ENCODE measurements at regions of chr2 and their contacts with region 1.

Region 1: GRCh38 chr2:11129598-11130449 is 25.4 kb upstream of the SLC66A3 start:
- DNase-seq: peak; percentile 50 to 91
- ATAC-seq: peak; percentile 61 to 69 (median 68)
- H3K4me3 ChIP-seq: peak overlapping the region; percentile 29
- H3K4me3 Mint-ChIP-seq: peak overlapping the region; percentile 80
- H3K27ac ChIP-seq: peak overlapping the region; percentile 45
- H3K27ac Mint-ChIP-seq: peak overlapping the region in 1 of 2 donors; percentile 45
- H3K4me1 ChIP-seq: peaks cover 34% of the 10 kb centered on the region
- H3K4me1 Mint-ChIP-seq: peaks cover 13 to 19% of the 10 kb centered on the region in 2 donors
- H3K27me3 ChIP-seq: no peaks in the 10 kb centered on the region
- H3K27me3 Mint-ChIP-seq: peaks cover 0 to 5% of the 10 kb centered on the region in 2 donors
- CTCF ChIP-seq: no peak

Region 2: GRCh38 chr2:11097038-11097720 is 32.6 kb before region 1 on chr2:
- intact Hi-C with region 1: no loop called
- DNase-seq: no peak
- ATAC-seq: no peak
- H3K4me3 ChIP-seq: no peak overlapping the region
- H3K4me3 Mint-ChIP-seq: no peak overlapping the region
- H3K27ac ChIP-seq: no peak overlapping the region
- H3K27ac Mint-ChIP-seq: no peak overlapping the region
- H3K4me1 ChIP-seq: no peaks in the 10 kb centered on the region
- H3K4me1 Mint-ChIP-seq: no peaks in the 10 kb centered on the region
- H3K27me3 ChIP-seq: no peaks in the 10 kb centered on the region
- H3K27me3 Mint-ChIP-seq: peaks cover 7% of the 10 kb centered on the region in 2 donors
- CTCF ChIP-seq: no peak

Region 3: DNA sequence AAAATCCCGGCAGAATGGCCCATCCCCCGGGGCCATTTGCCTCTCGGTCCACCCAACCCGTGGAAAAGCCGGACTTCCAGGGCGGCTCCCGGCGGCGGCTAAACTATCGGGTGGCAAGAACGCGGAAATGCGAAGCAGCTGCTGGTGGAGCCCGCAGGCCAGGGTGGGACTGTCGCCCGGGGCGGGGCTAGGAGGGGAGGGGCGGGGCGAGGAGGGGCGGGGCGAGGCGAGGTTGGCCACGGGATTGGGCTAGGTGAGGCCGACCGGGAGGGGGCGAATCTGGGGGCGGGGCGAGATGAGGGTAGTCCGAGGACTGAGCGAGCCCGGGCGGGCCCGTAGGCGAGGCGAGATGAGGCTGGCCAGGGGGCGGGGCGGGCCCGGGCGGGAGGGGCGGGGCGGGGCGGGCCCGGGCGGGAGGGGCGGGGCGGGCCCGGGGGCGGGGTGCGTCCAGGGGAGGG is 25.1 kb after region 1 on chr2:
- intact Hi-C with region 1: loop called (anchors 2 kb)
- DNase-seq: peak; percentile 94 to 98
- ATAC-seq: peak; percentile 90 to 97 (median 91)
- H3K4me3 ChIP-seq: peak overlapping the region; percentile 70
- H3K4me3 Mint-ChIP-seq: peak overlapping the region; percentile 75
- H3K27ac ChIP-seq: peak overlapping the region; percentile 95
- H3K27ac Mint-ChIP-seq: peak overlapping the region; percentile 75 to 86
- H3K4me1 ChIP-seq: peaks cover 26% of the 10 kb centered on the region
- H3K4me1 Mint-ChIP-seq: peaks cover 12 to 24% of the 10 kb centered on the region in 2 donors
- H3K27me3 ChIP-seq: no peaks in the 10 kb centered on the region
- H3K27me3 Mint-ChIP-seq: no peaks in the 10 kb centered on the region
- CTCF ChIP-seq: no peak

Region 4: DNA sequence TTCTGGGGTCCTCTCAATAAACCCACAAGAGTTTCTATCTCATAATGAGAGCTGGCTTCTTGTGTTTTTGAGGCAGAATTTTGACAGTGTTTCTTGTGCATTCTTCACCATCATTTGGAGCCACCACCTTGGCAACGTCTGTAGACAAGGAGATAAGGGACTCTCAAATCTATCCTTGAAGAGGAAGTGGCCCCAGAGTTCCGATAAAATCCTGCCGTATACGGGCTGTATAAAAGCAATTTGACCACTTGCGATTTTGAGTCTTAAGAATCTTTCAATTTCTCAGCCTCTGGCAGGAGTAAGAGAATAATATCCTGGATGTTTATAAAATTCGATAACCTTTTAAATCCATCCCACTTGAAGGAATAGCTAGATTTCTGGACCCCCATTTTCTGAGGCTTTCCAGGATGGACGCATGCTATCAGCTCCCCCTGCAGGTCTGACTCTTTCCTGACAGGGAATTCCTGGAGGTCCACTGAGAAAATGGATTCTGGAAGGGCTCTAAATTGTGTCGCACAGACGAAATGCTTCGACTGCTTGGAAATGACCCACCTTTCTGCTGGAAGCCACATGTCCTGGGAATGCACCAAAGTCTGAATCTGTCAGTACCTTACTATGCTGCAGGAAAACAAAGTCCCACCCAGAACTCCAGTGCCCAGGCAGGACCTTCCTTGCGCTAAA is 282.1 kb after region 1 on chr2:
- intact Hi-C with region 1: loop called (anchors 10 kb)
- DNase-seq: peak in 1 of 2 donors; percentile 30
- ATAC-seq: no peak
- H3K4me3 ChIP-seq: no peak overlapping the region
- H3K4me3 Mint-ChIP-seq: no peak overlapping the region
- H3K27ac ChIP-seq: no peak overlapping the region
- H3K27ac Mint-ChIP-seq: no peak overlapping the region
- H3K4me1 ChIP-seq: no peaks in the 10 kb centered on the region
- H3K4me1 Mint-ChIP-seq: no peaks in the 10 kb centered on the region
- H3K27me3 ChIP-seq: no peaks in the 10 kb centered on the region
- H3K27me3 Mint-ChIP-seq: peaks cover 12 to 21% of the 10 kb centered on the region in 2 donors
- CTCF ChIP-seq: no peak

Region 5: DNA sequence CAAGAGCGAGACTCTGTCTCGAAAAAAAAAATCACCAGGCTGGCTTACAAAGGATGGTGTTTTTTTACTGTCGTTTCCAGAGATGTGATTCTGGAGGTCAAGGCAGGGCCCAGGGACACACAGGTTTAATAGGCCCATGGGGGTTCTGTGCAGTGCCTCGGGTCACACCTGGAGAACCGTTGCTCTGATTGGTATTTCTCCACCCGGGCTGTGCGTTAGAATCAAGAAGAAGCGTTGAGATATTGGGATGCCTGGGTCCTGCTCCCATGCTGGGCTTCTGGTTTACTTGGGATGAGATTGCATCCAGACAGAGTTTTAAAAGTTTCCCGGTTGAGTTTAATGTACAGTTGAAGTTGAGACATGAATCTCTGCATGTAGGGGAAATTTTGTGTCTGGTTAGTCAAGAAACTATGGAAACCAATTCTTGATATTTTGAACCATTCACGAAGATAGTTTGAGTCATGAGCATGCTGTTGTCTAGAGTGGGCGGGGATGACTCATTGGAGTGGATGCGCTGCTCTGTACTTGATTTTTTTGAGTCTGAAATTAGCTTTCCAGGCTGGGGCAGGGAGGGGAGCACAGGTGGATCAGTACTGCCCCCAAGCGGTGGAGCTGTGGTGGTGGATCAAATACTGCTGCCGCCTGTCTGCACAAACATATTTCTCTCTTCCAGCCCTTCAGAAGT is 454.2 kb after region 1 on chr2:
- intact Hi-C with region 1: loop called (anchors 1 kb)
- DNase-seq: peak; percentile 27 to 68
- ATAC-seq: peak; percentile 65 to 76 (median 74)
- H3K4me3 ChIP-seq: no peak overlapping the region
- H3K4me3 Mint-ChIP-seq: no peak overlapping the region
- H3K27ac ChIP-seq: no peak overlapping the region
- H3K27ac Mint-ChIP-seq: no peak overlapping the region
- H3K4me1 ChIP-seq: no peaks in the 10 kb centered on the region
- H3K4me1 Mint-ChIP-seq: peaks cover 0 to 6% of the 10 kb centered on the region in 2 donors
- H3K27me3 ChIP-seq: no peaks in the 10 kb centered on the region
- H3K27me3 Mint-ChIP-seq: peaks cover 0 to 5% of the 10 kb centered on the region in 2 donors
- CTCF ChIP-seq: peak; percentile 56